Activated CD4-positive, alpha-beta T cell treated with anti-CD3 and anti-CD28 coated beads, Interleukin-2, amount 10 ng/mL, durations not matched to agents 7 days and 5 days (primary cell): ENCODE measurements at regions of chr15 and their contacts with region 1.

Region 1: DNA sequence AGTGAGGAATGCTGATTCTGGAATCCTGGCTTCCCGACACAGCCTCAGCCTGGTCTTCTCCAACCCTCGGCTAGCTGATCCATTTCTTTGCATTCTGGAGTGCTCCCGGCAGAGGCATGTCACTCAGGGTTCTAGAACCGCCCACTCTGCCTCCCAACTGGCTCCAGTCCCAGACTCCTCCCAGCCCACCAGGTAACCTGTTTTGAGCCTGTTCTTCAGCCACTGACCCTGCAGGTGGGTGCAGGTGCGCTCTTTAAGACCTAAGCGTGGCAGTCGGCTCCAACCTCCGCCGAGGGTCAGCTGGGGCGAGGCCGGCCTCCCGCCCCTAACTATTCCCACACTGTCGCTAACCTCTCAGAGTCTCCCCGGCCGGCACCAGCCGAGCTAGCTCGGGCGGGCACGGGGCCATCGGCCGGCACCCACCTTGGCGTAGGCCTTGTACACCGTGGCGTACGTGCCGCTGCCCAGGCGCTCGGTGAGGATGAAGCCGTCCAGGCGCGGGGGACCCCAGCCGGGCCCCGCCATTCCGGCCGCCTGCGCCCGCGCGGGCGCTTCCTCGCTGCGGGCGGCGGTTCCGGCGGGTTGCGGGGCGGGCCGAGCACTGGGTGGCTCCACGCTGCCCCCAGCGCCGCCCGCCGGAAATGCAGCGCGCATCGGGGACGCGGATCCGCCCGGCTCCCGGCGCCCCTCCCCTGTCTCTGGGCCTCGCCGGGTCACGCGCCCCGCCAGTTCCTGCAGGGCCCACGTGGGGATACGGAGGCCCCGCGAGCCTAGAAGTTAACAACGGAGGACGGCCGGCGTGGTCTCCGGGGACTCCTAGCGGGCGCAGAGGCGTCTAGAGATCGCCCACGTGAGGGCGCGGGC is at the start of gene ULK3:
- DNase-seq: peak; percentile 93
- H3K4me3 Mint-ChIP-seq: peak within 1 kb of the TSS; percentile 92
- H3K27ac Mint-ChIP-seq: peak within 1 kb of the TSS; percentile 95
- H3K4me1 Mint-ChIP-seq: peaks cover 58% of the 10 kb centered on the region
- H3K27me3 Mint-ChIP-seq: no peaks in the 10 kb centered on the region
- total RNA-seq, gene ULK3: 56.6 to 66.4 TPM

Region 2: DNA sequence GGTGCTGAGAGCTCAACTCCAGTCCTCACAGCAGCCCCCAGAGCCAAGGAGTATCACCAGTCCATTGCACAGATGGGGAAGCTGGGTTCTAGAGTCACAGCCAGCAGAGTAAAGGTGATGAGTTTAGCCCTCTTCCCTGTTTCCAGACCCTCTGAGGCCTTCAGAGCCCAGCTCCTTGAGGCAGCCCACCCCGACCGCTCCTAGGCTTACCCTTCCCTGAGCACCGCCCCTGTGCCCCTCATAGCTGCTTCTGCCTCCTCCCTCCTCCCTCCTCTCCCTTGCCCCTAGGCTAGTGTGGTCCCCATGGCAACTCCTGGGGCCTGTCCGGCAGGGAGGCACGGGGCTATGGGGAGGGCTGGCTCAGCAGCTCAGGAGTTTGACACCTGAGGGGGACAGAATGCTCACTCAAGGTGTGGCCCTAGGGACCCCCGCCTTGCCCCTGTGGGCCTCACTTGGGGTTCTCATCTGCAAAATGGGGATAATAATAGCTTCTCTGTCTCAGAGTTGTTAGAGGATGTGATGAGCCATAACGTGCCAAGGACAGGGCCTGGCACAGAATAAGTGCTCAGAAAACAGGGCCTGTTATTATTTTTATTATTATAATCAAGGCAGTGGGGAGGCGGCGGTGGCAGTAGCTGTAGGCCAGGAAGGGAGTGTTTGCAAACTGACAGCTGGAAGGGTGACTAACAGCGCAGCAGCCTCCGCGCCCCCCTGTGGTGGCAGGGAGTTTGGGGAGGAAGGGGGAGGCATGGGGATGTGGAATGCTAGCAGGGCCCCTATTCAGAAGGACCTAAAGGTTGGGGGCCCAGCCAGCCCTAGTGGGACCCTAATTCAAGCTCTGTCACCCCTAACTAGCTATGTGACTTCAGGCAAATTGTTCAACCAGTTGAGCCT is 49.4 kb before region 1 on chr15:
- CTCF ChIA-PET with region 1: interaction called, 23 read pairs
- POLR2A ChIA-PET with region 1: no interaction called
- DNase-seq: peak; percentile 72
- H3K4me3 Mint-ChIP-seq: peak overlapping the region; percentile 38
- H3K27ac Mint-ChIP-seq: peak overlapping the region; percentile 71
- H3K4me1 Mint-ChIP-seq: peaks cover 87% of the 10 kb centered on the region
- H3K27me3 Mint-ChIP-seq: no peaks in the 10 kb centered on the region

Region 3: GRCh38 chr15:74816808-74817674 is 25.8 kb before region 1 on chr15:
- CTCF ChIA-PET with region 1: interaction called, 10 read pairs
- POLR2A ChIA-PET with region 1: no interaction called
- DNase-seq: no peak
- H3K4me3 Mint-ChIP-seq: no peak overlapping the region
- H3K27ac Mint-ChIP-seq: peak overlapping the region; percentile 66
- H3K4me1 Mint-ChIP-seq: peaks cover 9% of the 10 kb centered on the region
- H3K27me3 Mint-ChIP-seq: peaks cover 2% of the 10 kb centered on the region

Region 4: DNA sequence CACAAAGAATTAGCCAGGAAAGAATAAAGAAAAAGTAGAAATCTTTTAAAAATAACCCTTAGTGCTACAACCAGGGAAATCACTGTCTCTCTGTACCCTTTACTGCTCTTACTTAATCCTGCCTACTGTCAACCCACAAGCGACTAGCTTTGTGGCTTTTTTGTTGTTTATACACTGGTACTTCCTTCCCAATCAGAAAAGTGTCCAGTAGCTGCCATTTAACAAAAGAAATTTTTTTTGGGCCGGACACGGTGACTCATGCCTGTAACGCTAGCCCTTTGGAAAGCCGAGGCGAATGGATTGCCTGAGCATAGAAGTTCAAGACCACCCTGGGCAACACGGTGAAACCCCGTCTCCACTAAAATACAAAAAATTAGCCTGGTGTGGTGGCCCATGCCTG is 77.6 kb after region 1 on chr15:
- CTCF ChIA-PET with region 1: no interaction called
- POLR2A ChIA-PET with region 1: no interaction called
- DNase-seq: no peak
- H3K4me3 Mint-ChIP-seq: no peak overlapping the region
- H3K27ac Mint-ChIP-seq: no peak overlapping the region
- H3K4me1 Mint-ChIP-seq: peaks cover 5% of the 10 kb centered on the region
- H3K27me3 Mint-ChIP-seq: no peaks in the 10 kb centered on the region

Region 5: GRCh38 chr15:75036314-75036649 is 193.5 kb after region 1 on chr15:
- CTCF ChIA-PET with region 1: no interaction called
- POLR2A ChIA-PET with region 1: no interaction called
- DNase-seq: no peak
- H3K4me3 Mint-ChIP-seq: no peak overlapping the region
- H3K27ac Mint-ChIP-seq: no peak overlapping the region
- H3K4me1 Mint-ChIP-seq: peaks cover 49% of the 10 kb centered on the region
- H3K27me3 Mint-ChIP-seq: no peaks in the 10 kb centered on the region